ENCODE measurements at regions of chr3 and their contacts with region 1.

Region 1: DNA sequence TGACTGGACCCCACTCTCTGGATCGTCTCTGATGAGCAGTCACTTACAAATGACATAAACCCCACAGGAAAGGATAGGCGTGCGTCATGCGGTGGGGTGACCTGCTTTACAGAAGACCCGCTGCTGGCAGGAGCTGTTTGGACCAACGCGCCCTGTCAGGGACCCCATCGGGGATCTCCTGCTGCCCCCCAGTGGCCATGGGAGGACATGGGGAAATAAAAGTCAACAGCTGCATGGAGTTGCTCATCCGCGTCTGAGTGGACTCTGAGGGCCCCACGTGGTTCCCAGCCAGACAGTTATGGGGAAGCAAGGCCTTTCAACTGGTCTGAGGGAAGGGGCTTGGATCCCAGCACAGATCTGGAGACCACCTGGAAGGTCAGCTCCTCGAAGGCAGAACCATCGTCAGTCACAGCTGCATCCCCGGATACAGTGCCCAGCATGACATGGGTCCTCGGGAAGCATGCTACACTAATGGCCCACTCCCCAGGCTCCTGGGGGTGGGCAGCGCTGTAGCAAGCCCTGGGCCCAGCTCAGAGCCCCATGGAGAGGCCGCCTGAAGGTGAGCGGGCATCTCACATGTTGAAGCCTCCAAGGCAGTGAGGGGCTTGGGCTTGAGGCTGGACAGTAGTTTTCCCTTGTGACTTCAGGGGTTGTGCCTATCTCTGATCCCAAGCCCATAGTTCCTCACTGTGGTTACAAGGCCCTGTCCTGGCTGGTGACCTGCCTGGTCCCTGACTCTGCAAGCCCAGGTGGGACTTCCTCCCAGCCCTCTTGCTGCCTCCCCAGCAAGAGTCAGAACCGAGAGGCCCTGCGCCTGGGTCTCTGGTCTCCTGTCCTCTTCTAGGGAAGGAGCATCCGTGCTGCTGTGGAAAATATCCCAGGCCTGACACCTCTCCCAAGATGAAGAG is 32.3 kb downstream of the PTH1R start:
- DNase-seq: peak; percentile 90
- ATAC-seq: peak; percentile 80

Region 2: DNA sequence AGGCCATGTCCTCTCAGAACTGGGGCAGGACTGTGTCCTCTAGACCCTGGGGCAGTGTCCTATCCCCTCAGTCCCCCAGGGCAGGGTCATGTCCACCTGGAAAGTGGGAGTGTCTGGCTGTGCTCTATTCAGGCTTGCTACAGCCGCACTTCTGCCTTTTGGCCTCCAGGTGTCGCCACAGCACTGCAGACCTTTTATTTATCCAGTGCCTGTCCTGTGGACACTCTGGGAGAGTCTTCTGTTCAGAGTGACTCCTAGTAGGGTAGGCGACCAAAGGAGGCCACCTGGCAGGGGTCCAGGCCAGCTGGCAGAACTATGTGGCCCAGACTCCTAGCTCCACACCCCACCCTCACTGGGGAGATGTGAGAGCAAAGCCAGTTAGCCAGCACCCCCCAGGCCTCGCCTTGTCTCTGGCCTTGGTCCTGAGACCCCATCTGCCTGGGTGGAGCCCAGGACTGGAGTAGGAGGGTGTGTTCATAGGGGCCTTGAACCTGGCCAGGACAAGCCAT is 204.7 kb before region 1 on chr3:
- intact Hi-C with region 1: loop called (anchors 5 kb)
- DNase-seq: peak; percentile 81
- ATAC-seq: peak; percentile 86

Region 3: GRCh38 chr3:48013288-48013980 is 1103.6 kb after region 1 on chr3:
- intact Hi-C with region 1: no loop called
- DNase-seq: no peak
- ATAC-seq: peak; percentile 89

Measured in left ventricle myocardium superior (tissue), 1 donor.